ENCODE measurements at regions of chr6 and their contacts with region 1.

Region 1: GRCh38 chr6:40308533-40309306 is 278.4 kb downstream of the LRFN2 start:
- DNase-seq: peak in 3 of 5 donors; percentile 36 to 47 (median 45)
- ATAC-seq: peak; percentile 47 to 69 (median 56)
- H3K4me3 ChIP-seq: no peak overlapping the region
- H3K27ac ChIP-seq: no peak overlapping the region
- H3K4me1 ChIP-seq: peaks cover 0 to 3% (median 0%) of the 10 kb centered on the region in 12 donors
- H3K27me3 ChIP-seq: peaks cover 0 to 30% (median 12%) of the 10 kb centered on the region in 9 donors
- CTCF ChIP-seq: peak; percentile 65 to 90 (median 83)
- POLR2A ChIP-seq: no peak

Region 2: GRCh38 chr6:39347906-39348585 is 960.7 kb before region 1 on chr6:
- intact Hi-C with region 1: loop called in 1 of 10 experiments (anchors 5 kb)
- DNase-seq: peak; percentile 43 to 70 (median 55)
- ATAC-seq: peak in 3 of 4 donors; percentile 63 to 78 (median 71)
- H3K4me3 ChIP-seq: no peak overlapping the region
- H3K27ac ChIP-seq: no peak overlapping the region
- H3K4me1 ChIP-seq: peaks cover 0 to 6% (median 0%) of the 10 kb centered on the region in 12 donors
- H3K27me3 ChIP-seq: no peaks in the 10 kb centered on the region
- CTCF ChIP-seq: peak; percentile 76 to 92 (median 84)
- POLR2A ChIP-seq: no peak

Region 3: DNA sequence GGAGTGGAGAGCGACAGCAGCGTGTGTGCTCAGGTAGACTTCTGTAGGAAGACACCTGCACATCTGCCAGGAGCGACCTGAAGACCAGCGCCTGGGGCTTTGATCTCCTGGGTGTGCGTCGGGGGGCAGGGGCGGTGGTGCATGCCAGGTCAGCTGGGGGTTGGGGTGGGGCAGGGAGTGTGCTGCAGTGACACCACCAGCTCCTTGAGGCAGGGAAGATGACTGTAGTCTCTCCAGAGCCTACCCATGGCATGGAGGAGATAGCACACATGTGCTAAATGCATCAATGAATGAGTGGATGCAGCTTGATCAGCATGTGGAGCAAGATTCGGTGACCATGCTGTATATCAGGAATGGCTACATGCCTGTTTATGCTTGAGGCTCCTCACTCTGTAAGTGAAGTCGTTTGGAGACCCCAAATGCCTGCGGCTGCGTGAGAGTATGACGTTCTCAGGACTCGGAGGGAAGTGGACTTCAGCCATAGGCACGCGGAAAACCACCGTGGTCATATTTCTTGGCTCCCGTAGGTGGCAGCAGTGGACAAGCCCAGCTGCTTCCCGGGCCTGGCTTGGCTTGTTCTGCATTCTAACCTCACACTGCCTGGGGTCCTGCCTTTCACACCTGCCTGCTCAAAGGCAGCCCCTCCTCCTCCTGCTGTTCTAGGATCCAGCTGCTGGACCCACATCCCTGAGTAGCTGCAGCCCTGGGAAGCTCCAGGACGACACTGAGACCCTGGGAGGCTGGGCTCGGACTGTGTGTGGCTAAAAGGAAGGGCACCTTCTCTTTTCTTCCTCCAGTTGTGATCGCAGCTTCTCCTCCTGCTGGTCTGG is 946.8 kb before region 1 on chr6:
- intact Hi-C with region 1: loop called in 8 of 10 experiments (anchors 5 to 10 kb)
- DNase-seq: peak; percentile 45 to 68 (median 61)
- ATAC-seq: peak; percentile 27 to 89 (median 76)
- H3K4me3 ChIP-seq: no peak overlapping the region
- H3K27ac ChIP-seq: no peak overlapping the region
- H3K4me1 ChIP-seq: peaks cover 0 to 12% (median 3%) of the 10 kb centered on the region in 12 donors
- H3K27me3 ChIP-seq: peaks cover 0 to 8% (median 0%) of the 10 kb centered on the region in 9 donors
- CTCF ChIP-seq: peak; percentile 64 to 82 (median 76)
- POLR2A ChIP-seq: no peak

Region 4: GRCh38 chr6:39377539-39377950 is 931.2 kb before region 1 on chr6:
- intact Hi-C with region 1: loop called in 4 of 10 experiments (anchors 5 to 10 kb)
- DNase-seq: peak in 4 of 5 donors; percentile 59 to 69 (median 62)
- ATAC-seq: peak; percentile 62 to 94 (median 88)
- H3K4me3 ChIP-seq: no peak overlapping the region
- H3K27ac ChIP-seq: no peak overlapping the region
- H3K4me1 ChIP-seq: peaks cover 0 to 10% (median 2%) of the 10 kb centered on the region in 12 donors
- H3K27me3 ChIP-seq: no peaks in the 10 kb centered on the region
- CTCF ChIP-seq: peak; percentile 35 to 77 (median 68)
- POLR2A ChIP-seq: no peak

Region 5: GRCh38 chr6:39865011-39865888 is 443.5 kb before region 1 on chr6:
- intact Hi-C with region 1: loop called in 1 of 10 experiments (anchors 10 kb)
- DNase-seq: peak; percentile 65 to 76 (median 73)
- ATAC-seq: peak in 3 of 4 donors; percentile 51 to 67 (median 60)
- H3K4me3 ChIP-seq: no peak overlapping the region
- H3K27ac ChIP-seq: no peak overlapping the region
- H3K4me1 ChIP-seq: peaks cover 0 to 16% (median 0%) of the 10 kb centered on the region in 12 donors
- H3K27me3 ChIP-seq: no peaks in the 10 kb centered on the region
- CTCF ChIP-seq: peak; percentile 57 to 87 (median 80)
- POLR2A ChIP-seq: no peak

Region 6: GRCh38 chr6:39980839-39981580 is 327.7 kb before region 1 on chr6:
- intact Hi-C with region 1: loop called (anchors 2 to 5 kb)
- DNase-seq: peak in 1 of 5 donors; percentile 18
- ATAC-seq: peak; percentile 59 to 82 (median 68)
- H3K4me3 ChIP-seq: no peak overlapping the region
- H3K27ac ChIP-seq: peak overlapping the region in 4 of 12 donors; percentile 19 to 59 (median 42)
- H3K4me1 ChIP-seq: peaks cover 0 to 34% (median 8%) of the 10 kb centered on the region in 12 donors
- H3K27me3 ChIP-seq: no peaks in the 10 kb centered on the region
- CTCF ChIP-seq: peak in 11 of 12 donors; percentile 20 to 59 (median 47)
- POLR2A ChIP-seq: no peak

Region 7: DNA sequence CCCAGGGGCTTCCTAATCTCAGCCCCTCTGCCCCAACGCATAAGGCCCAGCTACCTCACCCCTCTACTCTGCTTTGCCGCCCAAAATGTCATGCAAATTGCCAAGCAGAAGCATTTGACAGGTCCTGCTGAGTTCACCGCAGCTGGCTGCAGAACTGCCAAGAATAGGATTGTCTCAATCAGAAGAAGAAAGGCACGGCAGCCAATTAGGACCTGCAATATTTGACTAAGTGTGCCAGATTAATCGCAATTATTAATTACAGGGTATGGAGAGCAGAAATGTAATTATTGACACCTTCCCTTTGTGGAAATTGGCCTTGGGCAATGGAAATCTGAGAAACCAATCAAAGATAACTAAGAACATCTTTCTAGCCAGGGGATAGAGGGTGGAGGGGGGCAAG is 40.1 kb before region 1 on chr6:
- intact Hi-C with region 1: no loop called
- DNase-seq: no peak
- ATAC-seq: no peak
- H3K4me3 ChIP-seq: no peak overlapping the region
- H3K27ac ChIP-seq: no peak overlapping the region
- H3K4me1 ChIP-seq: no peaks in the 10 kb centered on the region
- H3K27me3 ChIP-seq: peaks cover 0 to 16% (median 0%) of the 10 kb centered on the region in 9 donors
- CTCF ChIP-seq: no peak
- POLR2A ChIP-seq: no peak

Region 8: DNA sequence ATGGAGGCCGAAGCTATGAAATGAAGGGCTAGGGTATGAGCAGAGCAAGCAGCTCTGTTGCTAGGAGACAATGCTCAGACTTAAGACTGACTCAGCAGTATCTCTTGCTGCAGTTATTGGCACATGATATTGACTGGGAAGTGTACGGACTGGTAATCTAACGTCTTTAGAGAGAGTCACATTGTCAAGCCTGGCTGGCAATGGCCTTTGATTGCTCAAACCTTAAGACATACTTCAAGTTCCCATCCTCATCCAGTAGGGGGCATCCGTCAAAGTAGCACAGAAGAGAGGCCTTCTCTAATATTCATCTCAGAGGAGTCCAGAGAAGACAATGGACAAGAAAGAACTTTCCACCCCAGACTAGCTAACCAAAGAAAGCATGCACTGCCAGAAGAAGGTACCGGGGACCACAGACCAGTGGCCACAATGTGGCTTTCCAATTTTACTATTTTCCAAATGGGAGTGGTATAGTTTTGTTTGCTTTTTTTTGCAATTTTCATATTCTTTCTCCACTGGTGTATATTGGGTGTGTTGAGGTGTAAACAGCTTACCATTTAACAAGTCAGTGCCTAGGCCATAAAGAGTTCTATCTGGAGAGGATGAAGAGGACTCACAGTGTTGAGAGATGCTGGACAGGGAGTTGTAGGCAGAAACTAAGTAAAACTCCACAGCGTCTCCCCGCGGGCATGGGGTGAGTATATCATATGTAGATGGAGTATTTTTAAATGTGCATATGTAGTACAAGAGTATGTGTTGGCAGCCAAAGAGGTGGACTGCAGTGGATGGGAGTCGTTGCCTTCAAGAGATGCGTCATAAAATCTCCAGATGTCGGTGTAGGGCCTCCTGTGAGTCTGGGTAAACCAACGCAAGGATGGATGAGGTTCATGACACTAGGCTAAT is 241.7 kb after region 1 on chr6:
- intact Hi-C with region 1: no loop called
- DNase-seq: no peak
- ATAC-seq: no peak
- H3K4me3 ChIP-seq: no peak overlapping the region
- H3K27ac ChIP-seq: no peak overlapping the region
- H3K4me1 ChIP-seq: no peaks in the 10 kb centered on the region
- H3K27me3 ChIP-seq: peaks cover 0 to 16% (median 0%) of the 10 kb centered on the region in 9 donors
- CTCF ChIP-seq: peak in 10 of 12 donors; percentile 21 to 57 (median 47)
- POLR2A ChIP-seq: no peak

Measured in heart left ventricle (tissue), 16 donors.